ENCODE measurements at regions of chr19 and their contacts with region 1.

Region 1: GRCh38 chr19:49937750-49938381 is 8.6 kb upstream of the NUP62 start:
- DNase-seq: peak; percentile 82
- ATAC-seq: peak; percentile 69
- H3K4me3 Mint-ChIP-seq: no peak overlapping the region
- H3K27ac Mint-ChIP-seq: no peak overlapping the region
- H3K4me1 Mint-ChIP-seq: peaks cover 19% of the 10 kb centered on the region
- H3K27me3 Mint-ChIP-seq: peaks cover 25% of the 10 kb centered on the region

Region 2: DNA sequence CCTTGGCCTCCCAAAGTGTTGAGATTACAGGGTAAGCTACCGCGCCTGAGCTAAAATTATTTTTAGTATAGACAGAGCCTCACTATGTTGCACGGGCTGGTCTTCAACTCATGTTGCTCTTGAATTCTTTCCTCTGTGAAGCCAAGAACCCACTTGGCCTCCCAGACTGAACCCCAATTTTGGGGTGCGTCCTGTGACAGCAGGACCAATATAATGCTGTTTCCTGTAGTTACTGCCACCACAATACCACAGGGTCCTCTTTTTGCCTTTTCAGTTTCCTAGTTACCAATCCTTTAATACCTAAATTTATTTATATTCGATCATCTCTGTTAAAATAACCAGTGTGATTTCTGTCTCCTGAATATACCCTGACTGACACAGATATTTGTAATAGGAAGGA is 207.7 kb before region 1 on chr19:
- CTCF ChIA-PET with region 1: no interaction called
- DNase-seq: no peak
- ATAC-seq: no peak
- H3K4me3 Mint-ChIP-seq: no peak overlapping the region
- H3K27ac Mint-ChIP-seq: no peak overlapping the region
- H3K4me1 Mint-ChIP-seq: peaks cover 3% of the 10 kb centered on the region
- H3K27me3 Mint-ChIP-seq: no peaks in the 10 kb centered on the region

Region 3: GRCh38 chr19:49921871-49922795 is 15.7 kb before region 1 on chr19:
- CTCF ChIA-PET with region 1: no interaction called
- DNase-seq: no peak
- ATAC-seq: peak; percentile 21
- H3K4me3 Mint-ChIP-seq: no peak overlapping the region
- H3K27ac Mint-ChIP-seq: peak overlapping the region; percentile 9
- H3K4me1 Mint-ChIP-seq: peaks cover 52% of the 10 kb centered on the region
- H3K27me3 Mint-ChIP-seq: no peaks in the 10 kb centered on the region

Region 4: GRCh38 chr19:49977881-49978280 is 40.0 kb after region 1 on chr19:
- CTCF ChIA-PET with region 1: interaction called, 11 read pairs
- DNase-seq: no peak
- ATAC-seq: no peak
- H3K4me3 Mint-ChIP-seq: no peak overlapping the region
- H3K27ac Mint-ChIP-seq: no peak overlapping the region
- H3K4me1 Mint-ChIP-seq: no peaks in the 10 kb centered on the region
- H3K27me3 Mint-ChIP-seq: no peaks in the 10 kb centered on the region

Region 5: DNA sequence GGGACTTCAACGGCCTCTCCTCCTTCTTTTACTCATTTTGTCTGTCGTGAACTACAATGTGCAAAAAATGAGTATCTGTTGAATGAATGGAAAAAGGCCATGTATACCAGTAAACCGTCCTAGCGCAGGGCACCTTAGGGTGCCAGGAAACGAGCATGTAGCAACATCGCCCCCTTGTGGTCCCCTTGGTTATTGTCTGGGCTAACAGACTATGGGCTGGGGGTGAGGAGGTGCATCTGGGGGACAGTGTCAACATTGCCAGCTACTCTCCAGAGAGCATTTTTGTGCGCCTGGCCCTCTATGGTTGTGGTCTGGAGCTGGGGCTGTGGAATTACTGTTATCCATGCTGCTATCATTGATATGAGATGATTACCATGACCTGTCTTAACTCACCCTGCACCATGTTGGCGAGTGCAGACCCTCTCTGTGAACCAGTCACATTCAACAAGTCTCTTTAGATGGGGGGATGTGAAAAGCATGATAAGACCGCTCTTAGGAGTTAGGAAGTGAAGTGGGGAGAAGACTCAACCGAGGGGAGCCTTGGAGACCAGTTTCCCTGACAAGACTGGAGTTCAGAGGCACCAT is 45.9 kb after region 1 on chr19:
- CTCF ChIA-PET with region 1: interaction called, 22 read pairs
- DNase-seq: peak; percentile 81
- ATAC-seq: peak; percentile 67
- H3K4me3 Mint-ChIP-seq: no peak overlapping the region
- H3K27ac Mint-ChIP-seq: no peak overlapping the region
- H3K4me1 Mint-ChIP-seq: peaks cover 6% of the 10 kb centered on the region
- H3K27me3 Mint-ChIP-seq: no peaks in the 10 kb centered on the region

Measured in activated CD8-positive, alpha-beta memory T cell treated with anti-CD3 and anti-CD28 coated beads, Interleukin-2, amount 10 ng/mL, durations not matched to agents 7 days and 5 days (primary cell).